Caco-2 (cell line): ENCODE measurements at regions of chr7 and their contacts with region 1.

Region 1: GRCh38 chr7:16657656-16658279 is 11.8 kb downstream of the BZW2 start:
- DNase-seq: peak; percentile 79 to 89
- H3K4me3 ChIP-seq: no peak overlapping the region
- H3K4me3 Mint-ChIP-seq: peak overlapping the region; percentile 3
- H3K27ac Mint-ChIP-seq: peak overlapping the region; percentile 58
- H3K4me1 ChIP-seq: peaks cover 69% of the 10 kb centered on the region
- H3K4me1 Mint-ChIP-seq: peaks cover 36% of the 10 kb centered on the region
- H3K27me3 ChIP-seq: no peaks in the 10 kb centered on the region
- H3K27me3 Mint-ChIP-seq: no peaks in the 10 kb centered on the region
- CTCF ChIP-seq: peak in 1 of 2 experiments; percentile 9

Region 2: GRCh38 chr7:16083931-16084330 is 573.8 kb before region 1 on chr7:
- CTCF ChIA-PET with region 1: no interaction called
- POLR2A ChIA-PET with region 1: interaction called, 10 read pairs
- intact Hi-C with region 1: no loop called
- DNase-seq: peak in 1 of 2 experiments; percentile 12
- H3K4me3 ChIP-seq: no peak overlapping the region
- H3K4me3 Mint-ChIP-seq: no peak overlapping the region
- H3K27ac Mint-ChIP-seq: peak overlapping the region; percentile 76
- H3K4me1 ChIP-seq: peaks cover 23% of the 10 kb centered on the region
- H3K4me1 Mint-ChIP-seq: peaks cover 33% of the 10 kb centered on the region
- H3K27me3 ChIP-seq: no peaks in the 10 kb centered on the region
- H3K27me3 Mint-ChIP-seq: no peaks in the 10 kb centered on the region
- CTCF ChIP-seq: no peak

Region 3: DNA sequence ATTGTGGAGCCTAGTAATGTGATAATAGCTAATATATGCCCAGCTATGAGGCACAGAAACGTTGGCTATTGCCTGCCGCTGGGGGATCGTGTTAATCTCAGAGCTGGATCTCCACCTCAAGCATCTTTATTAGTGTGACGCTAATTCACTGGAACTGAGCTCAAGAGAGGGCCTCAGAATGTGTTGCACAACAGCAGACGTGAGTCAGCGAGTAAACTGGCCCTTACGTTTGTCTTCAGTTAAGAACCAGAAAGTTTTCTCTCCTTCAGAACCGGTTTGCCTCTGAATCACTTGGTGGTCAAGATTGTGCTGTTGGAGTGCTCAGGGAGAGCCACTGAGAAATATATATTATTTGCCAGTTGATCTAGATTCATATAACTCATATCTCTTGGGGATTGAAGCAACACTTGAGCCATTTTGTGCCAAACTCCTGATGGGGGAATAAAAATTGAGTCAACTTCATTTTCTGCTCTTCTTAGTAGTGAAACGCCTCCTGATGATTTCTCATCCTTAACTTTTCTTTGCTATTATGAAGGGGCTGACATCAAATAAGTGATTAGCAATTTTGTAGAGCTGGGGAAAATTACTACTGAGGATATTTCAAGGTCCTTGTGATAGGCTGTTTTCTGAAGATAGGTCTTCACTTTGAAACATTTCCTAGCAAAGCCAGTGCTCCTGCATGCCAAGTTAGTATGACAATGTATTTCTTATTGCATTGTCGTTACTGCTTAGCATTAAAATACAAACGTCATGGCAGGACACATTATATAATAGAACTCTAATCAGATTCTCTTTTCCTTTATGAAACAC is 10.5 kb after region 1 on chr7:
- CTCF ChIA-PET with region 1: no interaction called
- POLR2A ChIA-PET with region 1: interaction called, 5 read pairs
- intact Hi-C with region 1: loop called (anchors 1 kb)
- DNase-seq: peak; percentile 87 to 91
- H3K4me3 ChIP-seq: no peak overlapping the region
- H3K4me3 Mint-ChIP-seq: peak overlapping the region; percentile 58
- H3K27ac Mint-ChIP-seq: peak overlapping the region; percentile 90
- H3K4me1 ChIP-seq: peaks cover 43% of the 10 kb centered on the region
- H3K4me1 Mint-ChIP-seq: peaks cover 56% of the 10 kb centered on the region
- H3K27me3 ChIP-seq: no peaks in the 10 kb centered on the region
- H3K27me3 Mint-ChIP-seq: no peaks in the 10 kb centered on the region
- CTCF ChIP-seq: no peak

Region 4: GRCh38 chr7:17392846-17393245 is 735.1 kb after region 1 on chr7:
- CTCF ChIA-PET with region 1: no interaction called
- POLR2A ChIA-PET with region 1: no interaction called
- intact Hi-C with region 1: no loop called
- DNase-seq: no peak
- H3K4me3 ChIP-seq: no peak overlapping the region
- H3K4me3 Mint-ChIP-seq: no peak overlapping the region
- H3K27ac Mint-ChIP-seq: no peak overlapping the region
- H3K4me1 ChIP-seq: no peaks in the 10 kb centered on the region
- H3K4me1 Mint-ChIP-seq: no peaks in the 10 kb centered on the region
- H3K27me3 ChIP-seq: no peaks in the 10 kb centered on the region
- H3K27me3 Mint-ChIP-seq: no peaks in the 10 kb centered on the region
- CTCF ChIP-seq: no peak